ENCODE measurements at regions of chr7 and their contacts with region 1.

Region 1: DNA sequence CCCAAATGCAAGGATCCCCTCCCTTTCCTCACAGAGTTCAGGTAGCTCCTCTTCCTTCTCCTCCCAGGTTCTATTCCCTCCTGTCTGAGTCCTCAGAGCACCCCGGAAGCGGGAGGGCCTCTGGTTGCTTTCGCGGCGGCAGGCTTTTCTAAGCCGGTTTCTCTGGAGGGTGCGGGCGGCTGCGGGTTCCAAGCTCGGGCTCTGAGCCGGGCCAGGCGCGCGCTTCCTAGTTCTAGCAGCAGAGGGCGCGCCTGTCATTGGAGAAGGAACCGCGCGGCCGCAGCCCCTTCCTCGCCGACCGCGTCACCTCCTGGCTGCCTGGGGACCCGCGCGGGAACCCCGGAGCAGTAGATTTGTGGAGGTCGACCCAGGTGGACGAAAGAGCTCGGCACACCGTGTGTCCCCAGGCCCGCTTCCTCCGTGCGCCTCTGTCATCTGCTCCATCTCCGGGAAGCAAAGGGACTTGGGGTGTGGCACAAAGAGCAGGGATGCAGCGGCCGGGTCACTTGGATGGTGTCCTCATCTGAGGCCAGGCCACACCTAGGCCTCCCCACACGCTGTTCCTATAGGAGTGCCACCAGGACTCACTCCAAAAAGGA is 389.0 kb upstream of the PODXL start:
- DNase-seq: no peak
- H3K4me3 ChIP-seq: peak overlapping the region; percentile 30 to 57 (median 46)
- H3K27ac ChIP-seq: no peak overlapping the region
- H3K4me1 ChIP-seq: peaks cover 18 to 45% (median 43%) of the 10 kb centered on the region in 4 donors
- H3K27me3 ChIP-seq: peaks cover 0 to 13% (median 0%) of the 10 kb centered on the region in 4 donors
- CTCF ChIP-seq: peak; percentile 79 to 99 (median 89)
- EP300 ChIP-seq: no peak
- POLR2A ChIP-seq: no peak

Region 2: DNA sequence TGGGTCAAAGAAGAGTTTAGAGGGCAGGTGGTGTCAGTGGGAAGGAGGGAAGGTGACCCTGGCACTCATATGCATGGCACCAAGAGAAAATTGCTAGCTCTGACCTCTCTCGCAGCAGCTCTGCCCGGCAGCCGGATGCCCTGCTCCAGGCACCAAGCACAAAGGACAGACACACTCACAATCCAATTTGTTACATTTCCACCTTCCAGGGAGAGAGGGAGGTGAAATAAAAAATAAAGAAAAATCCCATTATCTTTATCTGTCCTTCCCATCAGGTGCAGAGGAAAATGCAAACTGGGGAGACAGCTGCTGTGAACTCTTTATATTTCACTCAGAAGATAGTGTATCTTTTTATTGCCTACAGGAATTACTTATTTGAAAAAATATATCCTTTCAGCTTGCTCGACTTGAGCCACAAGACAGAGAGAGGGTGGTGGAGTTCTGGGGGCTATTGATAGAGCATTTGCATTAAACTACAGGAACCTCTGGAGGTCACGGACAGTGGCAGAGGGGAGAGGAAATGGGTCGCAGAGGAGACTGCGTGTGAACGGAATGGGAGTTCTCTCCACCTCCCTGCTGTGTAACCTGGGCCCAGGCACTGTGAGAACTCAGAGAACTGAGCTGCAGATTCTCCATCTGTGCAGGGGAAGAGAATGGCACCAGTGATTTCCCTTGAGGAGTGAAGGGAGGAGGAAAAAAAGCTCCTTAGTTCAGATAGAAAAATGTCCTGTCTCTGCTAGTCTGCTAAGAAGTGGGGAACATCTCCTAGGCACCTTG is 209.5 kb after region 1 on chr7:
- intact Hi-C with region 1: loop called (anchors 5 kb)
- DNase-seq: no peak
- H3K4me3 ChIP-seq: no peak overlapping the region
- H3K27ac ChIP-seq: no peak overlapping the region
- H3K4me1 ChIP-seq: no peaks in the 10 kb centered on the region
- H3K27me3 ChIP-seq: no peaks in the 10 kb centered on the region
- CTCF ChIP-seq: no peak
- EP300 ChIP-seq: no peak
- POLR2A ChIP-seq: no peak

Region 3: GRCh38 chr7:132250883-132251653 is 305.7 kb after region 1 on chr7:
- intact Hi-C with region 1: loop called (anchors 10 kb)
- DNase-seq: no peak
- H3K4me3 ChIP-seq: no peak overlapping the region
- H3K27ac ChIP-seq: peak overlapping the region in 3 of 4 donors; percentile 27 to 69 (median 43)
- H3K4me1 ChIP-seq: peaks cover 31 to 59% (median 57%) of the 10 kb centered on the region in 4 donors
- H3K27me3 ChIP-seq: no peaks in the 10 kb centered on the region
- CTCF ChIP-seq: no peak
- EP300 ChIP-seq: no peak
- POLR2A ChIP-seq: no peak